ENCODE measurements at regions of chr10 and their contacts with region 1.

Region 1: DNA sequence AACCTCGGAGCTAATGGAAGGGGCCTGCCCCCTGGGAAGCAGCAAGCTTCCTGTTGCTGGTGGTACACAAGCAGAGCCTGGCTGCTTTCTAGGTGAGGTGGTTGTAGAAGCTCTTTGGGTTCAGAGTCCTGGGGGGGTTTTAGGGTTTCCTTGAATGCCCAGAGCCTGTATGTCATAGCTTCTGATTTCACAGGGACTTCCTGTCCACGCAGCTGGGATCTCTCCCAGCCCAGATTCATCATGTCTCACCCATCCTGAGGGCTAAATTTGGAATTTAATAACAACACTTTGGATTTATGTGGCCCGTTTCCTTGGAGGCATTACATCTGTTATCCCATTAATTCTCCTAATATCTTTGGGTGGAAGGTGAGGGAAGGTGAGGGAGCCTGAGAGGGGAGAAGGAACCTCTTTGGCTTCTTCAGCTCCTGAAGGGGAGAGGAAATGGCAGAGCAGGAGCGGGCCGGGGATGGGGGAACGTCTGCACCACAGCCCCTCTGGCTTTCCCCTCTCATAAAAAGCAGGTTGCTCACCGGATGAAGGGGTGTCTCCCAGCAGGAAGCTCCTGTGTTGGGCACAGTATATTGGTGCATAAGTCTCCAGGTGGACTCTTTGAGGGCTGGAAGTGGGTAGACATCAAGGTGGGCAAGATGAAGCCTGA is 19.7 kb downstream of the RPS24 start:
- DNase-seq: no peak
- H3K4me3 ChIP-seq: no peak overlapping the region
- H3K27ac ChIP-seq: no peak overlapping the region
- H3K4me1 ChIP-seq: no peaks in the 10 kb centered on the region
- H3K27me3 ChIP-seq: no peaks in the 10 kb centered on the region
- CTCF ChIP-seq: no peak
- POLR2A ChIP-seq: no peak

Region 2: GRCh38 chr10:76353237-76353851 is 1700.0 kb before region 1 on chr10:
- intact Hi-C with region 1: no loop called
- DNase-seq: no peak
- H3K4me3 ChIP-seq: no peak overlapping the region
- H3K27ac ChIP-seq: no peak overlapping the region
- H3K4me1 ChIP-seq: no peaks in the 10 kb centered on the region
- H3K27me3 ChIP-seq: no peaks in the 10 kb centered on the region
- CTCF ChIP-seq: no peak
- POLR2A ChIP-seq: no peak

Region 3: GRCh38 chr10:78672918-78673317 is 619.6 kb after region 1 on chr10:
- intact Hi-C with region 1: no loop called
- DNase-seq: no peak
- H3K4me3 ChIP-seq: no peak overlapping the region
- H3K27ac ChIP-seq: no peak overlapping the region
- H3K4me1 ChIP-seq: no peaks in the 10 kb centered on the region
- H3K27me3 ChIP-seq: no peaks in the 10 kb centered on the region
- CTCF ChIP-seq: no peak
- POLR2A ChIP-seq: no peak

Region 4: DNA sequence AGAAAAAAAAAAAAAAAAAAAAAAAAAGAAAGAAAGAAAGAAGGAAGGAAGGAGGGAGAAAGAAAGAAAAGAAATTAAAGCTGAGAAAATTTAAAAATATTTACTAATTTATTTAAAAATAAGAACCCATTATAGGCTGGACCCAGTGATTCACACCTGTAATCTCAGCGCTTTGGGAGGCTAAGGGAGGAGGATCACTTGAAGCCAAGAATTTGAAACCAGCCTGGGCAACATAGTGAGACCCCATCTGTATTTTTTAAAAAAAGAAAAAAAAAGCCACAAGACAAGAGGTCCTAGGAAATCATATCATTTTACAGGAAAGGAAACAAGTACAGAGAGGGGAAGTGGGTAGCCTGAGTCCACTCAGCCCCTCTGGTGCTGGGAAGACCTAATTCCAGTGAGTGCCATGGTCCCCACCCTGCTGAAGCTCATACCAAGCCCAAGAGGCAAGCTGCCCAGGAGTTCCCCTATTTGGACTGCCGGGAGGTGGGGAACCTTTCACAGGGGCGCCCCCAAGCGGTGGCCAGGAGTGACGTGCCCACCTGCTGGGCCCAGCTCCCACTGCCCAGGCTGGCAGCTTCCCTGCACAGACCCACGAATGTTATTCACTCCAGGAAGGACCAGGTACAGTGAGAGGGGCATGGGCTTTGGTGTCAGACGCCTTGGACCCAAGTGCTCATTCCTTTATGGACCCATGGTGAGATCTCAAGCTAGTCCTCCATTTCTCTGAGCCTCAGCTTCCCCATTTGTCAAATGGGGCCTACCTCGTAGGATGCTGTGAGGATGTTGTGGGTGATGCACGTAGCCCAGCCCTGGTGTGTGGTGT is 1149.1 kb after region 1 on chr10:
- intact Hi-C with region 1: loop called (anchors 10 kb)
- DNase-seq: no peak
- H3K4me3 ChIP-seq: no peak overlapping the region
- H3K27ac ChIP-seq: no peak overlapping the region
- H3K4me1 ChIP-seq: no peaks in the 10 kb centered on the region
- H3K27me3 ChIP-seq: no peaks in the 10 kb centered on the region
- CTCF ChIP-seq: peak in 1 of 3 donors; percentile 23
- POLR2A ChIP-seq: no peak